ENCODE measurements at regions of chr10 and their contacts with region 1.

Region 1: GRCh38 chr10:28663576-28664313 is 13.6 kb upstream of the BAMBI start:
- DNase-seq: peak; percentile 72
- ATAC-seq: peak; percentile 94

Region 2: GRCh38 chr10:28842321-28842720 is 178.6 kb after region 1 on chr10:
- intact Hi-C with region 1: no loop called
- DNase-seq: no peak
- ATAC-seq: no peak

Region 3: GRCh38 chr10:28991326-28992270 is 327.9 kb after region 1 on chr10:
- intact Hi-C with region 1: loop called (anchors 5 kb)
- DNase-seq: peak; percentile 47
- ATAC-seq: peak; percentile 93

Region 4: DNA sequence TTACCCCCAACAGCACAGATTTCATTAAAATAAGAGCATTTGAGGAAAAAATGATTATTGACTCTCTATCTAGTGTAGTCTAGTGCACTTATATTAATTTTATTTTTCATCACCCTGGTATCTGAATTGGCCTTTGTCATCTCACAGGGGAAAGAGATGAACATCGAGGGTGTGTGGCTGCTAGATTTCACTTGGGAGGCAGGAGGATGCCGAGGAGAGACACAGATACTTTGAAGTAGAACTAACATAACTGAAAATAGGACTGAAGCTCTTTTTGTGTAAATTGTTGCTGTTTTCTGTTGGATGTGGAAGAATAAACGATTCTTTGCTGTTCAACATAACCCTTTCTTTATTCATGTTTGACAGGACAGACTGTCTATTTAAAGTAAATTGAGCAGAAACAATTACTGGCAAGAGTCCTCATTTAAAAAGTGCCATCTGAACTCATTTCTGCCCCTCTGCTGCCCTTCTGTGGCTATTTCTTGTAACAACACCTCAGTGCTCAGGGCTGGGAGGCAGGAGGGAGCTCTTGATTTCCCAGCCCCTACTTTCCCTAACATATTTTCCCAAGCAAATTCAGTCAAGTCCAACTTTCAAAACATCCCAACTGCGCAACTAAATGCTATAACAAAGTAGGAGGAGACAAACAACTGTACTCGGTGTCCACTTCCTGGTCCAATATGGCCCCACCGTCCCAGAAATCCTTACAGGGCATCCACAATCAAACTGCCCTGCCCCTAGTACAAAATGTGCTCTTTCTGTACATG is 640.7 kb after region 1 on chr10:
- intact Hi-C with region 1: loop called (anchors 10 kb)
- DNase-seq: no peak
- ATAC-seq: peak; percentile 85